ENCODE measurements at regions of chr1 and their contacts with region 1.

Region 1: GRCh38 chr1:178262120-178262500 is 168.2 kb downstream of the RASAL2 start:
- DNase-seq: no peak
- H3K4me3 ChIP-seq: peak overlapping the region in 27 of 59 donors; percentile 3 to 60 (median 20)
- H3K27ac ChIP-seq: peak overlapping the region in 24 of 59 donors; percentile 2 to 72 (median 42)
- H3K27me3 ChIP-seq: no peaks in the 10 kb centered on the region
- CTCF ChIP-seq: no peak

Region 2: DNA sequence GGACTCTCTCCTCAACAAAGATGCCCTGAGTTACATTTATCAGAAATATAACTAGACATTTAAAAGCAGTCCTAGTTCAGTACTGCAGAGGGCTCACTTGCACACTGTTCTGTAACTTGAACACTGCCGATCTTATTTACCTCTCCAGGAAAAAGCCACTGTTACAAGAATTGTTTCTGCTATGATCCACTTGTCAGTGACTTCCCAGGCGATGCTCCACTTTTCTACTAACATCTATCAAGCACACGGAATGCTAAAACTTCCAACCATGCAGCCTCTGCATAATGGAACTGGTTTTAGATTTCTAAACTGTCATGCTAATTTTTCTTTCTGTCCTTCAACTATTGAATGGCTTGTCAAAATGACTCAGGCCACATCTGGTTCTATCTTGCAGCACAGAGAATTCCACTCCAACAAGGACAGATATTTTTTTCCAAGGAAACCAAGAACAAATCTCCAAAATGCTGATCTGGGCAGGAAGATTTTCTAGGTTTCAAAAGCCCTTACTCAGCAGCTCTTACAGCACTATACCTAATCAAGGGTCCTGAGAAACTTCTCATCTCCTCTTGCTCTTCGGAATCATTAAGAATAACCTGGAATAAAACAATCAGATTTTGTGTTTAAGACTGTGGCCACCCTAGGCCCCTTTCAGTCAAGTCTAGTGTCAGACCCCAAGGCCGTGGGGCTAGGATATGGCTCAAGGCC is 302.1 kb before region 1 on chr1:
- intact Hi-C with region 1: loop called in 1 of 2 experiments (anchors 10 kb)
- DNase-seq: no peak
- H3K4me3 ChIP-seq: no peak overlapping the region
- H3K27ac ChIP-seq: peak overlapping the region in 56 of 59 donors; percentile 18 to 88 (median 72)
- H3K27me3 ChIP-seq: no peaks in the 10 kb centered on the region
- CTCF ChIP-seq: peak in 53 of 56 donors; percentile 14 to 64 (median 44)

Measured in dorsolateral prefrontal cortex (tissue), 120 donors.